ENCODE measurements at regions of chrX and their contacts with region 1.

Region 1: DNA sequence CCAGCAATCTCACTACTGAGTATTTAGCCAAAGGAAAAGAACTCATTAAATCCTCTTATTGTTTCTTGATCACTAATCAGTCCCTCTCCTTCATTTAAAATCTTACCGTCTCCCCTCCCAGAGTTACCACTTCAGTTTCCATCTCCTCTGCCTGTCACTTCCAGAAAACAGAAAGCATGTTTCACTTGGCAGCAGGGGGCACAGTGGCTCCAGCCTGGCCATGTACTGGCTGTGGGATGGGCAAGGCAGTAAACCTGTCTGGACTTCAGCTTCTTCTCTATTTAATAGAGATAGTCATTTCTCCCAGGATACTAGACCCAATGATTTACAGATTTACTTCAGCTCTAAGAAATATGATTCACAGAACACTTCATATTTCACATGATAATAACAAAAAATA is 63.2 kb downstream of the CD40LG start:
- DNase-seq: peak; percentile 15 to 30
- ATAC-seq: peak in 6 of 8 donors; percentile 55 to 86 (median 80)
- H3K4me3 ChIP-seq: no peak overlapping the region
- H3K27ac ChIP-seq: peak overlapping the region in 2 of 10 donors; percentile 21 to 72
- H3K4me1 ChIP-seq: peaks cover 0 to 35% (median 7%) of the 10 kb centered on the region in 9 donors
- H3K27me3 ChIP-seq: peaks cover 0 to 15% (median 0%) of the 10 kb centered on the region in 7 donors
- CTCF ChIP-seq: peak in 8 of 9 donors; percentile 28 to 62 (median 47)

Region 2: DNA sequence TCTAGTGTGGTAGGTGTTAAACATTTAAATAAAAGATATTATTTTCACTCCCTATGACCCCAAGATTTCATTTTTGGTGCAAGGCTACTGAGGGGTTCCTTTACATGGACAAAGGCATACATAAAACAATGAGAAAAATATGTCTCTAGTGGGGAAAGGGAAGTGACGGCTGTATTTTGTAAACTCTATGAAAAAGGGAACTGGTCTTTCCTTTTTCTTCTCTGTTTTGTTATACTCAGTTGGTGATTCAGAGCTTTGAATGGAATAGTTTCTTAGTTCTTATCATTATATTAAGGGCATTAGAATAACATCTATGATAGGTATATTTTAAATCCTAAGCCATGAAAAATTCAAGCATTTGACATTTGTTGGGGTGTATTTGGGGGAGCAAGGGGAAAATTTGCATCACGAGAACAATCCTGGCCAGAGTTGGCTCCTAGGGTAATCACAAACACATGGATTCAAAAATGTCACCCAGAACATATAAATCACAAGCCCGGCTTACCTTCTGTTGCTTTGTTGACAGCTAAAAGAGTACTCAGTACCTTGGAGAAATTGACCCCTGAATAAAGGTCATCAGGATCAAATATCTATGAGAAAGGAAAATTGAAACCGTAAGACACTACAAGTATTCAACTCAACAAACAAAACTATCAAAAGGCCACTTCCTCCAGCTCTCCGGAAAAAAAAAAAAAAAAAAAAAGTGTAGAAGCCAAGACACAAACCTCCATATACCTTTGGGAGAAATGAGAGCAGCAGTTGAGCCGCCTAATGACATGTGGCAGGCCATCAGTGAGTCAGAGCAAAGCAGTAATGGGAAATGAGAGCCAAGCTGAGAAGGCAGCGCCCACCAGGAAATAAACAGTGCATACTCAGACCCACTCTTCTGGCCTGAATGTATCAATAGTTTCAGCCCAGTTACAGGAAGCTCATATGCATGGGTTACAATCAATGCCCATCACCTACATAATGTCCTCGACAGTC is 36.1 kb after region 1 on chrX:
- intact Hi-C with region 1: loop called in 1 of 10 experiments (anchors 2 kb)
- DNase-seq: no peak
- ATAC-seq: peak in 4 of 8 donors; percentile 30 to 75 (median 61)
- H3K4me3 ChIP-seq: no peak overlapping the region
- H3K27ac ChIP-seq: peak overlapping the region in 9 of 10 donors; percentile 10 to 82 (median 39)
- H3K4me1 ChIP-seq: peaks cover 0 to 77% (median 37%) of the 10 kb centered on the region in 9 donors
- H3K27me3 ChIP-seq: peaks cover 0 to 7% (median 0%) of the 10 kb centered on the region in 7 donors
- CTCF ChIP-seq: no peak

Region 3: GRCh38 chrX:136767104-136767941 is 56.2 kb after region 1 on chrX:
- intact Hi-C with region 1: loop called in 4 of 10 experiments (anchors 5 to 10 kb)
- DNase-seq: peak; percentile 65 to 73
- ATAC-seq: peak; percentile 82 to 93 (median 89)
- H3K4me3 ChIP-seq: peak overlapping the region; percentile 51 to 77 (median 74)
- H3K27ac ChIP-seq: peak overlapping the region; percentile 92 to 97 (median 94)
- H3K4me1 ChIP-seq: peaks cover 0 to 32% (median 17%) of the 10 kb centered on the region in 9 donors
- H3K27me3 ChIP-seq: peaks cover 0 to 7% (median 0%) of the 10 kb centered on the region in 7 donors
- CTCF ChIP-seq: peak in 7 of 9 donors; percentile 8 to 51 (median 29)

Region 4: DNA sequence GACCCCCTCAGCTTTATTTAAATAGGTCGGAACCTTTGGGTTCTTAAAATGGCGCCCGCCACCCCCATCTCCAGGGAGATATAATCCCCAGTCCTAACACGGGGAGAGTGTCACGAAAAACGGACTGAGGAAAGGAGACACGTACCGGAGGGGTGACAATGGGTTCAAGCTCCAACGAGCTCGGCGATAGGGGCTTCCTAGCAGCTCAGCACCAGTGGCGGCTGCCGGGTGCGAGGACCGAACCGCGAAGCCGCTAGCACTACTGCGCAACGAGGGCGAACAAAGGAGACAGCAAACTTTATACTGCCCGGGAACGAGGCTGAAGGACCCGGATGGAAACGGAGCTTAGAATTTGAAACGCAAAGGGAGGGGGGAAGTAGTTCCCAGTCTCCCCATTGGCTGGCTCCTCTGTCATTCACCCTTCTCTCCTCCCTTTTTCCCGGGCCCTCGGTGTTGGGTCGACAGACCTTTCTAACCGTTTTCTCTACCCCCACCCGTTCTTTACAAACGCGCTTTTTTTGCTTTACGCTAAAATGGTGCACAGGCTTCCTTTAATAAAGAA is 169.4 kb after region 1 on chrX and contains the start of gene RBMX:
- intact Hi-C with region 1: loop called in 1 of 10 experiments (anchors 10 kb)
- DNase-seq: peak; percentile 79 to 95
- ATAC-seq: peak; percentile 93 to 98 (median 97)
- H3K4me3 ChIP-seq: peak within 1 kb of the TSS; percentile 50 to 92 (median 79)
- H3K27ac ChIP-seq: peak within 1 kb of the TSS; percentile 86 to 97 (median 94)
- H3K4me1 ChIP-seq: peaks cover 0 to 24% (median 7%) of the 10 kb centered on the region in 9 donors
- H3K27me3 ChIP-seq: no peaks in the 10 kb centered on the region
- CTCF ChIP-seq: no peak
- total RNA-seq, gene RBMX: 85.7 to 107 (median 91.0) TPM

Region 5: DNA sequence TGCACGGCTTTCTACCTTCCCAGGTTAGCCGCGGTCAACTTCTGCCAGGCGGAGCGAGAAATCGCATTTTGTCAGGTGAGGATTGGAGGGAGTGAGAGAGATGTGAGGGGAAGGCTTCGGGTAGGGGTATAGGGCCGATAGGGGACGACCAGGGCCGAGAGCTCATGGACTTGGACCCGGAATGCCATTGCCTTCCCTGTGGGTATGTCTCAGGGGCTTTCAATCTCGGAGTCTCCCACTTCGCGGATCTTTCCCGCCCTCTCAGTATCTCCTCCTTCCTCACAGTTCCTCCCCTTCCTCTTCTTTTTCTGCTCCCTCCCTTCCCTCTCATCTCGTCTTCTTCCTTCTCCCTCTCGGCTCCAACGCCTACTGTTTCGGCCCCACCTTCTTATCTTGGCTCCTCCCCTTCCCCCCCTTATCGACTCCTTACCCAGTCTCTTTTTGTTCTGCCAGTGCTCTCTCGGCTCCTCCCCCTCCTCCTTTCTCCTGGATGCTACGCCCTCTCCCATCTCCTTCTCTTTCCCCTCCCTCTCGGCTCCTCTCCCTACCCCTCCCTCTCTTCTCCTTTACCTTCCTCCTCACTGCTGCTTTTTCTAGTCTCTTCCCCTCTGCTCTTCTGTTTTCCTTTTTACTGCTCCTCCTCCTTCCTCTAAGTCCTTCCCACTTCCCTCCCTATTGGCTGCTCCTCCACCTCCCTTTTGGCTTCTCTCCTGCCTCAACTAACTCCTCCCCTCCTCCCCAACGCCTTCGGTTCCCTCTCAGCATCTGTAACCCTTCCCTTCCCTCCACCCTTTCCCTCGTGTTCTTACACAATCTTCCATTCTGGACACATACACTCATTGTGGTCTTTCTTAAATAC is 198.8 kb after region 1 on chrX:
- intact Hi-C with region 1: loop called in 1 of 10 experiments (anchors 5 kb)
- DNase-seq: peak; percentile 40 to 89
- ATAC-seq: peak; percentile 83 to 91 (median 88)
- H3K4me3 ChIP-seq: peak overlapping the region; percentile 40 to 84 (median 67)
- H3K27ac ChIP-seq: peak overlapping the region; percentile 22 to 84 (median 82)
- H3K4me1 ChIP-seq: peaks cover 0 to 15% (median 0%) of the 10 kb centered on the region in 9 donors
- H3K27me3 ChIP-seq: no peaks in the 10 kb centered on the region
- CTCF ChIP-seq: no peak

Region 6: DNA sequence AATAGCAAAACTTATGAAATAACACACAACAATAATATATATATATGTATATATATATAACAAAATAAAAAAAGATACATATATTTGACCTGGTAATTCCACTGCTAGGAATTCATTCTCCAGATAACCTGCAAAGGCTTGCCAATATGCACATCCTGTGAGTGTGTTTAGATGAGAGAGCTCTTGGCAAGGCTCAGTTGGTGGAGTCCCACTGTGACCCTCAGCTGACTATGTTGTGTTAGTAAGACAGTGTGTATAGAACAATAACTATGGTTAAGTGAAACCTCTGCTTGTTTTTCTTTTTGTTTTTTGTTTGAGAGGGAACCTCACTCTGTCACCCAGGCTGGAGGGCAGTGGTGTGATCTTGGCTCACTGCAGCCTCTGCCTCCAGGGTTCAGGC is 208.9 kb after region 1 on chrX:
- intact Hi-C with region 1: loop called in 7 of 10 experiments (anchors 5 kb)
- DNase-seq: no peak
- ATAC-seq: peak in 3 of 8 donors; percentile 42 to 68 (median 47)
- H3K4me3 ChIP-seq: no peak overlapping the region
- H3K27ac ChIP-seq: no peak overlapping the region
- H3K4me1 ChIP-seq: peaks cover 0 to 4% (median 0%) of the 10 kb centered on the region in 9 donors
- H3K27me3 ChIP-seq: no peaks in the 10 kb centered on the region
- CTCF ChIP-seq: no peak

Region 7: DNA sequence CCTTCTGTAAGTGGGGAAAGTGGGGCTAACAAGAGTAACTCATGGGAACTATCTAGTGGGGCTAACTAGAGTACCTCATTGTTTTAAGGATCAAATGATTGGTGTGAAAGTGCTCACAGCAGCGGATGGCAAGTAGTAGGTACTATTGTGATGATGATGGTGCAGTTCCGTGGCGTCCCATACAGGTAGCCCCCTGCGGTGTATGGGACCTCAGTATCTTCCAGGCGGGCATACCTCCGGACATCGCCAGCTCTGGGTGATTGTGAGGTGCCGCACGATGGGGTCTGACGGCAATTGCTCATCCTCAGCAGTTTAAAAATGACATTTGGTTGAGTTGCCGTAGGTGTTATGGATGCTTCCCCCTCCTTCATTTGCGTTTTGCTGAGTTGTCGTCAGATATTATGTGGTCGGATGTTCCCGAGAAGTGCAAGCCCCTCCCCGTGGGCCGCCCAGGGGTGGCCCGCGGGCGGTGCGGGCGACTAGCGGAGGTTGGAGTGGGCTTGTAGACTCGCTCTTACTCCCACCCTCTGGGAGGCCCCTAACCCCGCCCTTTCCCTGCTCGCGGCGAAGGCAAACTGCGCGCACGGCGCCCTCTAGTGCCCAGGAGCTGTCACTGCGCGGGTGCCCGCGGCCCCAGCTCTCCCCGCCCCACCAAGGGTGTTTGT is 341.0 kb after region 1 on chrX:
- intact Hi-C with region 1: loop called in 1 of 10 experiments (anchors 10 kb)
- DNase-seq: peak; percentile 34 to 65
- ATAC-seq: peak; percentile 72 to 84 (median 80)
- H3K4me3 ChIP-seq: peak overlapping the region in 9 of 10 donors; percentile 26 to 54 (median 47)
- H3K27ac ChIP-seq: no peak overlapping the region
- H3K4me1 ChIP-seq: peaks cover 0 to 12% (median 4%) of the 10 kb centered on the region in 9 donors
- H3K27me3 ChIP-seq: peaks cover 0 to 75% (median 11%) of the 10 kb centered on the region in 7 donors
- CTCF ChIP-seq: peak; percentile 61 to 86 (median 80)